Head of caudate nucleus (tissue), 42 donors: ENCODE measurements at regions of chr5 and their contacts with region 1.

Region 1: GRCh38 chr5:10283927-10284635 is 23.6 kb downstream of the CMBL start:
- DNase-seq: peak; percentile 75 to 95 (median 90)

Region 2: GRCh38 chr5:10249948-10250803 is 33.9 kb before region 1 on chr5 and contains the start of gene CCT5:
- intact Hi-C with region 1: no loop called
- DNase-seq: peak; percentile 78 to 96 (median 90)

Region 3: DNA sequence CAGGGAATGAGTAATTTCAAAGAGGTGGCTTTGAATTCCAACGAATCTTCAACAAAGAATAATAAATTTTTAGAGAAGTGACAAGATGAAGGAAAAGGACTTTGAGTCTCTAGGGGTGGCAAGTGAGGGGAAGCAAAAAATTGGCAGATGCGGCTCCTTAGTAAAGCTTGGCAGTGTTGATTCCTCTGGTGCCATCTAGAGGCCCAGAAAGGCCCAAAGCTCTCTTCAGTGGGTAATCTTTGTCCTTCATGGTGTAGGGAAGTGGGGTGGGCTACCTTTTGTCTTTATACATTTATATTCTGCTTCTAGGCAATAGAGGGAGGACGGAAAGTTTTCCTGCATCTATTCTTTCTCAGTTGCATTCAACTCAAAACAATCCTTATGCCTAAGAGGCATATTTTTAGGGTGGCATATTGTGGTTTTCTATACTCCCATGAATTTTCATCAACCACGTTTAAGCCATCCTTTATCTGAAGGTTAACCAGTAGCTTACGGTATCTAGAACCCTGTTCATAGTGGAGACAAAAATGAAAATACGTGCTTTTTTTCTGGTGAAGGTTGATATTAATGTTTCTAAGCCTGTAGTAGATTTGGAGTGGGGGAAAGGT is 140.1 kb after region 1 on chr5:
- intact Hi-C with region 1: loop called (anchors 1 kb)
- DNase-seq: peak in 37 of 42 donors; percentile 23 to 83 (median 58)

Region 4: DNA sequence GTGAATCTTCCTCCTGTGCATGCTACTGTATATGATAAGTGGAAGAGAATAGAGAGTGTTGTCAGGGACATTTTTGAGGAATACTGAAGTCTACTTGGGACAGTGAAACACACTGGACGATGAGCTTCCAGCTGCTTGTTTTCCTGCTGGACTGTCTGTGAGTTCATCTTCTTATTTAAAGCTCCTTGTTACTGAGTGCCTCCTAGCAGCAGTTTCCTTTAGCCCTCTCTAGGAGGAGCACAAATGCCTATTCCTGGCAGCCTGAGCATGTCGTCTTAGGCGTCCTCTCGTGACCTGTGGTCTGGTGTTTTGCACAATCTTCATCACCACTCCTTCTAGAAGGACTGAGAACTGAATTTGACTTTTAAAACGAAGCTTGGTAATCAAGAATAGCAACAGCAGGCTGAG is 323.6 kb after region 1 on chr5:
- intact Hi-C with region 1: no loop called
- DNase-seq: peak in 1 of 42 donors; percentile 3

Region 5: GRCh38 chr5:10627160-10627701 is 343.1 kb after region 1 on chr5:
- intact Hi-C with region 1: loop called (anchors 10 kb)
- DNase-seq: peak in 1 of 42 donors; percentile 30